Breast epithelium (tissue), 4 donors: ENCODE measurements at regions of chr3 and their contacts with region 1.

Region 1: DNA sequence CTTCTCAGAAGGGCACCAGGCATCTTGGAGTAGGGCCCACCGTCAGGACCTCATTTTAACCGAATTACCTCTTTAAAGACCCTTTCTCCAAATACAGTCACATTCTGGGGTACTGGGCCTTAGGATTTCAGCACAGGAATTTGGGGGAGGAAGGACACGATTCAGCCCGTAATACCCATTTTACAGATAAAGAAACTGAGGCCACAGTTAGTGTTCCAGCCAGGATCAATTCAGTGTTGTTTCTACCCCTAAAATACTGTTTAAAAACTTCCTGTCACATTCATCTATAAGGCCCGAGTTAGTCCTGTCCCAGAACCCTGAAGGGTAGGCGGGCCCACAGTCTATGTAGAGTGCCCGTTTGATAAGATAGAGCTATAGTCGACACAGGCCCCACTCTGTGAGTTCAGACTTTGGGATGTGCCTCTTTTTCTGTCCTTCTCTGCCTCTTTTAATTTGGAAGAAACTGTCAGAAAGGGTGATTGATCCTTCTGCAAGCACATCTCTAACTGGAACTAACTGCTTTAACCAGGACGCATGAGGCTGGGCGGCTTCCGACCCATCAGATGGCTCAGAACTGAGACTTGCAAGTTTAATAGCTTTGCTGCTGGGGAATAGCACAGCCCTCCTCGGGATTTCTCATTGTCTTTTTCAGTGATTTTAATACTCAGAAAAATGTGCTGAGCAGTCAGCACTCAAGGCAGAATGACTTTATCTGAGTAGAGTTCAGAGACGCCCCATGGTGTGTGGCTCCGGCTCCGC is 19.5 kb downstream of the BFSP2 start:
- DNase-seq: no peak
- H3K4me3 ChIP-seq: no peak overlapping the region
- H3K27ac ChIP-seq: no peak overlapping the region
- H3K4me1 ChIP-seq: peaks cover 0 to 4% of the 10 kb centered on the region in 2 donors
- H3K27me3 ChIP-seq: no peaks in the 10 kb centered on the region
- CTCF ChIP-seq: no peak
- POLR2A ChIP-seq: no peak

Region 2: GRCh38 chr3:131439084-131439483 is 1980.2 kb before region 1 on chr3:
- intact Hi-C with region 1: loop called (anchors 5 kb)
- DNase-seq: no peak
- H3K4me3 ChIP-seq: no peak overlapping the region
- H3K27ac ChIP-seq: no peak overlapping the region
- H3K4me1 ChIP-seq: no peaks in the 10 kb centered on the region
- H3K27me3 ChIP-seq: no peaks in the 10 kb centered on the region
- CTCF ChIP-seq: no peak
- POLR2A ChIP-seq: no peak